MCF 10A (cell line): ENCODE measurements at regions of chr16 and their contacts with region 1.

Region 1: GRCh38 chr16:30526823-30527635 is 663 bp upstream of the ZNF768 start:
- DNase-seq: peak; percentile 99
- H3K4me3 Mint-ChIP-seq: peak overlapping the region; percentile 81
- H3K27ac Mint-ChIP-seq: peak overlapping the region; percentile 88
- H3K4me1 Mint-ChIP-seq: peaks cover 21% of the 10 kb centered on the region
- H3K27me3 Mint-ChIP-seq: no peaks in the 10 kb centered on the region
- CTCF ChIP-seq: peak; percentile 18

Region 2: GRCh38 chr16:30445408-30446202 is 81.4 kb before region 1 on chr16 and contains the start of gene SEPHS2:
- CTCF ChIA-PET with region 1: interaction called, 5 read pairs
- POLR2A ChIA-PET with region 1: interaction called, 7 read pairs
- intact Hi-C with region 1: loop called (anchors 2 kb)
- DNase-seq: peak; percentile 99
- H3K4me3 Mint-ChIP-seq: peak within 1 kb of the TSS; percentile 80
- H3K27ac Mint-ChIP-seq: peak within 1 kb of the TSS; percentile 90
- H3K4me1 Mint-ChIP-seq: peaks cover 17% of the 10 kb centered on the region
- H3K27me3 Mint-ChIP-seq: no peaks in the 10 kb centered on the region
- CTCF ChIP-seq: peak; percentile 11
- total RNA-seq, gene SEPHS2: 51.9 and 73.3 TPM in 2 replicates

Region 3: DNA sequence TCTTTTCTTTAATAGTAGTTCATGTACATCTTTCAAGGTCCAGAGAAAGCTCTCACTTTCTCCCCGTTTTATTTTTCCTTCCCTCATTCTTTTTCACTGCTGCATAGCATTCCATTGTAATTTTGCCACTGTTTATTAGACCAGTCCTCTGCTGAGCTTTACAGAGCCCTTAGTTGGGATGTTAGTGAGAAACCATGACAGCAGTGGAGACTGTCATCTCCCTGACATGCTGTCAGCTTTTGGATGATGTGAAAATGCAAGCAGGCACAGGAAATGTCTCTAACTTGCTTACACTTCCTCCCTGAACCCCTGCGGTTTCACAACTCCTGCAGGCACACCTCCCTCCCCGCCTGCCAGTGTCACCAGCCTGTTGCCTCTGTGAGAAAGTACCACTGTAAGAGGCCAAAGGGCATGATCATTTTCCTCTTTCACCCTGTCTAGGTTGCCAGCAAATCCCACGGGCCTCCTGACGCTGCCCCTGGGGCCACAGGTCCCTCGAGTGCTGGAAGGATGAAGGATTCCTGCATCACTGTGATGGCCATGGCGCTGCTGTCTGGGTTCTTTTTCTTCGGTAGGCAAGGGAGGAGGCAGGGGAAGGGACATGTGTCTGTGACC is 54.6 kb before region 1 on chr16 and contains the start of gene ITGAL:
- CTCF ChIA-PET with region 1: no interaction called
- POLR2A ChIA-PET with region 1: interaction called, 4 read pairs
- intact Hi-C with region 1: loop called (anchors 1 kb)
- DNase-seq: no peak
- H3K4me3 Mint-ChIP-seq: no peak within 1 kb of the TSS
- H3K27ac Mint-ChIP-seq: no peak within 1 kb of the TSS
- H3K4me1 Mint-ChIP-seq: peaks cover 8% of the 10 kb centered on the region
- H3K27me3 Mint-ChIP-seq: no peaks in the 10 kb centered on the region
- CTCF ChIP-seq: no peak
- total RNA-seq, gene ITGAL: not detected in 2 replicates

Region 4: DNA sequence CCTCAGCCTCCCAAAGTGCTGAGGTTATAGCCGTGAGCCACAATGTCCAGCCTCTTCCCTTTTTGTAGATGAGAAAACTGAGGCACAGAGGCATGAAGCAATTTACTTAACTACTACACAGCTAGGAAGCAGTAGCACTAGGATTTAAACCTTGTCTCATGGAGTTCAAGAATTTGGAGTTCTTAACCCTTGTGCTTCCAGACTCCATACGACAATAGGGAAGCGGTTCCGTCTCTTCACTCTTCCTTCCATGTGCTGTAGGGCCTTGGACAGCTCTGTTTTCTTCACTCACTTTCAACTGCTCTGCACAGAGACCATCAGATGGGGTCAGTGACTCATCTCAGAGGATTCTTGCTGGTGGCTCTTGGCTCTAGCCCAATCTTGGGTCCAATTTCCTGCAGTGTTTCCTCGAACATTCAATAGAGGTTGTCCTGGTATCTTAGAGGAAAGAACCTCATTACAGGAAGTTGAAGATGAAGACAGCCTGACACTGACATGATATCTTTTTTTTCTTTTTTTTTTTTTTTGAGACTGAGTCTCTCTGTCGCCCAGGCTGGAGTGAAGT is 35.2 kb before region 1 on chr16:
- CTCF ChIA-PET with region 1: interaction called, 3 read pairs
- POLR2A ChIA-PET with region 1: interaction called, 10 read pairs
- intact Hi-C with region 1: loop called (anchors 2 kb)
- DNase-seq: peak; percentile 82
- H3K4me3 Mint-ChIP-seq: no peak overlapping the region
- H3K27ac Mint-ChIP-seq: no peak overlapping the region
- H3K4me1 Mint-ChIP-seq: peaks cover 20% of the 10 kb centered on the region
- H3K27me3 Mint-ChIP-seq: no peaks in the 10 kb centered on the region
- CTCF ChIP-seq: no peak

Region 5: GRCh38 chr16:30571695-30572600 is 44.9 kb after region 1 on chr16 and contains the start of gene ZNF688:
- CTCF ChIA-PET with region 1: no interaction called
- POLR2A ChIA-PET with region 1: interaction called, 4 read pairs
- intact Hi-C with region 1: loop called (anchors 5 kb)
- DNase-seq: peak; percentile 97
- H3K4me3 Mint-ChIP-seq: peak within 1 kb of the TSS; percentile 75
- H3K27ac Mint-ChIP-seq: peak within 1 kb of the TSS; percentile 76
- H3K4me1 Mint-ChIP-seq: peaks cover 19% of the 10 kb centered on the region
- H3K27me3 Mint-ChIP-seq: no peaks in the 10 kb centered on the region
- CTCF ChIP-seq: no peak
- total RNA-seq, gene ZNF688: 9.0 and 11.6 TPM in 2 replicates

Region 6: DNA sequence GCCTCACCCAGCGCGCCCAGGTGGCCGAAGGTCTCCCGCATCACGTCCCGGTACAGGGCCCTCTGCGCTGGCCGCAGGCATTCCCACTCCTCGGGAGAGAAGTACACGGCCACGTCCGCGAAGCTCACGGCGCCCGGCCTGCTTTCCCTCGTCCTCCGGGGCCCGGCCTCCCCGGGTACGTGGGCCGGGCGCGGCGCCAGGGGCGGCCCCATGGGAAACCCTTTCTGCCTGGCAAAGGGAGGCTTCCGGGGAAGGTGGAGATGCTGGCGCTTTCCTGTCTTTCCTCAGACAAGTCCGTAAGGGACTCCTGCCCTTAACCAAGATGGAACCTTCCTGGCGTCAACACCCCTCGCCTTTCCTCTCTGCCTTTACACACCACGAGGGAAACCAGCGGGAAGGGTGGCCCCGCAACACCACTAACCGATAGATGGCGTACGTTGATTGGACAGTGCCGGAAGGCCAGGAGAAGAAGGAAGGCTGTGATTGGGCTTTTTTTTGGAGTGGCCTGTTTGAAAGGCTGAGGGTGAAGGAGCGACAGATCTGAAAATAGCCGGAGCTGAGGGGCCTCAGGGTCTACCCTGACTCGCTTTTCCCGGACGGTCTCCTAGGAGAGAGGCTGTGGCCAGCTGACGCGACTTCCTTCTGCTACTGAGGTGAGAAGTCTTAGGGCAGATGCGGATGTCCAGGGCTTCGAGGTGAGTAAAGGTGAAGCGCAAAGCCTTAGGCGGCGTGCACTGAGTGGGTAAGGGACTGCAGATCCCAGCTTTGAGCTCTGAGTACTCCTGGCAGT is 58.6 kb after region 1 on chr16 and contains the start of gene ZNF785:
- CTCF ChIA-PET with region 1: no interaction called
- POLR2A ChIA-PET with region 1: interaction called, 8 read pairs
- intact Hi-C with region 1: loop called (anchors 2 kb)
- DNase-seq: peak; percentile 100
- H3K4me3 Mint-ChIP-seq: peak within 1 kb of the TSS; percentile 96
- H3K27ac Mint-ChIP-seq: peak within 1 kb of the TSS; percentile 78
- H3K4me1 Mint-ChIP-seq: no peaks in the 10 kb centered on the region
- H3K27me3 Mint-ChIP-seq: no peaks in the 10 kb centered on the region
- CTCF ChIP-seq: no peak
- total RNA-seq, gene ZNF785: 12.8 and 16.3 TPM in 2 replicates